ENCODE measurements at regions of chr4 and their contacts with region 1.

Region 1: GRCh38 chr4:100742045-100742444 is 224.2 kb upstream of the EMCN start:
- DNase-seq: peak; percentile 76
- H3K4me3 ChIP-seq: no peak overlapping the region
- H3K27ac ChIP-seq: no peak overlapping the region
- H3K4me1 ChIP-seq: no peaks in the 10 kb centered on the region
- H3K27me3 ChIP-seq: no peaks in the 10 kb centered on the region
- CTCF ChIP-seq: peak; percentile 69

Region 2: GRCh38 chr4:100093091-100093866 is 648.8 kb before region 1 on chr4:
- CTCF ChIA-PET with region 1: interaction called, 6 read pairs
- POLR2A ChIA-PET with region 1: no interaction called
- intact Hi-C with region 1: loop called (anchors 1 kb)
- DNase-seq: peak; percentile 98
- H3K4me3 ChIP-seq: no peak overlapping the region
- H3K27ac ChIP-seq: no peak overlapping the region
- H3K4me1 ChIP-seq: peaks cover 25% of the 10 kb centered on the region
- H3K27me3 ChIP-seq: no peaks in the 10 kb centered on the region
- CTCF ChIP-seq: peak; percentile 86

Region 3: GRCh38 chr4:100372432-100372831 is 369.6 kb before region 1 on chr4:
- CTCF ChIA-PET with region 1: no interaction called
- POLR2A ChIA-PET with region 1: no interaction called
- intact Hi-C with region 1: loop called (anchors 5 kb)
- DNase-seq: peak; percentile 50
- H3K4me3 ChIP-seq: no peak overlapping the region
- H3K27ac ChIP-seq: no peak overlapping the region
- H3K4me1 ChIP-seq: no peaks in the 10 kb centered on the region
- H3K27me3 ChIP-seq: no peaks in the 10 kb centered on the region
- CTCF ChIP-seq: peak; percentile 65

Region 4: GRCh38 chr4:100421361-100421978 is 320.6 kb before region 1 on chr4:
- CTCF ChIA-PET with region 1: no interaction called
- POLR2A ChIA-PET with region 1: interaction called, 12 read pairs
- intact Hi-C with region 1: loop called (anchors 1 kb)
- DNase-seq: peak; percentile 70
- H3K4me3 ChIP-seq: no peak overlapping the region
- H3K27ac ChIP-seq: no peak overlapping the region
- H3K4me1 ChIP-seq: peaks cover 6% of the 10 kb centered on the region
- H3K27me3 ChIP-seq: no peaks in the 10 kb centered on the region
- CTCF ChIP-seq: peak; percentile 72

Region 5: GRCh38 chr4:100494166-100494825 is 247.7 kb before region 1 on chr4:
- CTCF ChIA-PET with region 1: interaction called, 17 read pairs
- POLR2A ChIA-PET with region 1: no interaction called
- intact Hi-C with region 1: no loop called
- DNase-seq: no peak
- H3K4me3 ChIP-seq: no peak overlapping the region
- H3K27ac ChIP-seq: peak overlapping the region; percentile 26
- H3K4me1 ChIP-seq: peaks cover 35% of the 10 kb centered on the region
- H3K27me3 ChIP-seq: no peaks in the 10 kb centered on the region
- CTCF ChIP-seq: no peak

Region 6: GRCh38 chr4:100517864-100518341 is 224.1 kb before region 1 on chr4 and contains the start of gene EMCN:
- CTCF ChIA-PET with region 1: no interaction called
- POLR2A ChIA-PET with region 1: no interaction called
- intact Hi-C with region 1: loop called (anchors 10 kb)
- DNase-seq: peak; percentile 51
- H3K4me3 ChIP-seq: peak within 1 kb of the TSS; percentile 33
- H3K27ac ChIP-seq: peak within 1 kb of the TSS; percentile 76
- H3K4me1 ChIP-seq: peaks cover 24% of the 10 kb centered on the region
- H3K27me3 ChIP-seq: no peaks in the 10 kb centered on the region
- CTCF ChIP-seq: no peak
- total RNA-seq, gene EMCN: 7.8 and 7.9 TPM in 2 replicates

Region 7: GRCh38 chr4:100566396-100566795 is 175.6 kb before region 1 on chr4:
- CTCF ChIA-PET with region 1: no interaction called
- POLR2A ChIA-PET with region 1: no interaction called
- intact Hi-C with region 1: no loop called
- DNase-seq: no peak
- H3K4me3 ChIP-seq: no peak overlapping the region
- H3K27ac ChIP-seq: no peak overlapping the region
- H3K4me1 ChIP-seq: no peaks in the 10 kb centered on the region
- H3K27me3 ChIP-seq: no peaks in the 10 kb centered on the region
- CTCF ChIP-seq: no peak

Region 8: GRCh38 chr4:100823066-100823992 is 81.3 kb after region 1 on chr4:
- CTCF ChIA-PET with region 1: no interaction called
- POLR2A ChIA-PET with region 1: no interaction called
- intact Hi-C with region 1: no loop called
- DNase-seq: no peak
- H3K4me3 ChIP-seq: no peak overlapping the region
- H3K27ac ChIP-seq: no peak overlapping the region
- H3K4me1 ChIP-seq: no peaks in the 10 kb centered on the region
- H3K27me3 ChIP-seq: no peaks in the 10 kb centered on the region
- CTCF ChIP-seq: no peak

Measured in A673 (cell line).